ENCODE measurements at regions of chr16 and their contacts with region 1.

Region 1: GRCh38 chr16:27367461-27368357 is 34.3 kb upstream of the IL21R start:
- DNase-seq: no peak
- H3K4me3 ChIP-seq: 0 out of 2 replicates have a peak overlapping the region, but pooled peaks have one; percentile 1
- H3K27me3 ChIP-seq: no peaks in the 10 kb centered on the region
- CTCF ChIP-seq: peak; percentile 92

Region 2: DNA sequence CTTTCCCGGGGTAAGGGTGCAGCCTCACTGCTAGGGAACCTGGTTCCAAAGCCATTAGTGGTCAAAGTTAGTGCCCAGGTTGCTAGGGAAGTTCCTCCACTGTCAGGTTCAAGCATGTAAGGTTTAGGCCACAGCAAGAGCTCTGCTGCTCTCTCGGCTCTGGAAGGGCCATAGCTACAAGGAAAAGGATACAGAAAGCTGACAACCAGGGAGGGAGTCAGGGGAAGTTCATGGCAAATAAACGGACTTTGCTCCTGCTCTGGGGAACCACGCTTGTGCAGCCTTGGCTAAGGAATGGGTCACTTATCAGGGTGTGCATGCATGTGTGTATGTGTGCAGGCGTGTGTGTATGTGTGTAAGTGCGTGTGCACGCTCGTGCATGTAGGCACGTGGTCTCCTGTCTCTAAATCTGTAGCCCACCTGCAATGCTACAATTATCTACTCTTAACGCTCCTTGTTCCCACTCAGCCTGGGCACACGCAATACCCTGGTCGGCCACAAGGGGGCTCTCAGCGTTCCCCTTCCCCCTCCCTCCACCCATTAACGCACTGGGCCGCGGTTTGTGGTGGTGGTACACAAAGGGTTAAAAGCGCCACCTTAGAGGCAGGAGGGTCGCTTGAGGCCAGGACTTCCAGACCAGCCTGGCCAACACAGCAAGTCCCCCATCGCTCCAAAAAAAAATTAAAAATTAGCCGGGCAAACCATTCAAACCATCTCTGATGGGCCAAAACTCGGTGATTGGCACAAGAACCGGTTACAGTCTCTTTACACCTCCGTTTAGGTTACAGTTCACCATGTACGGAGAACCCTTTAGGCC is 212.8 kb before region 1 on chr16:
- CTCF ChIA-PET with region 1: interaction called, 51 read pairs
- POLR2A ChIA-PET with region 1: no interaction called
- DNase-seq: no peak
- H3K4me3 ChIP-seq: no peak overlapping the region
- H3K27me3 ChIP-seq: no peaks in the 10 kb centered on the region; the same call in none of the 2 replicates
- CTCF ChIP-seq: peak; percentile 98

Region 3: GRCh38 chr16:27179500-27180072 is 188.1 kb before region 1 on chr16:
- CTCF ChIA-PET with region 1: interaction called, 55 read pairs
- POLR2A ChIA-PET with region 1: no interaction called
- DNase-seq: no peak
- H3K4me3 ChIP-seq: no peak overlapping the region
- H3K27me3 ChIP-seq: peaks cover 3% of the 10 kb centered on the region; the same call in 1 of the 2 replicates
- CTCF ChIP-seq: peak; percentile 81

Region 4: DNA sequence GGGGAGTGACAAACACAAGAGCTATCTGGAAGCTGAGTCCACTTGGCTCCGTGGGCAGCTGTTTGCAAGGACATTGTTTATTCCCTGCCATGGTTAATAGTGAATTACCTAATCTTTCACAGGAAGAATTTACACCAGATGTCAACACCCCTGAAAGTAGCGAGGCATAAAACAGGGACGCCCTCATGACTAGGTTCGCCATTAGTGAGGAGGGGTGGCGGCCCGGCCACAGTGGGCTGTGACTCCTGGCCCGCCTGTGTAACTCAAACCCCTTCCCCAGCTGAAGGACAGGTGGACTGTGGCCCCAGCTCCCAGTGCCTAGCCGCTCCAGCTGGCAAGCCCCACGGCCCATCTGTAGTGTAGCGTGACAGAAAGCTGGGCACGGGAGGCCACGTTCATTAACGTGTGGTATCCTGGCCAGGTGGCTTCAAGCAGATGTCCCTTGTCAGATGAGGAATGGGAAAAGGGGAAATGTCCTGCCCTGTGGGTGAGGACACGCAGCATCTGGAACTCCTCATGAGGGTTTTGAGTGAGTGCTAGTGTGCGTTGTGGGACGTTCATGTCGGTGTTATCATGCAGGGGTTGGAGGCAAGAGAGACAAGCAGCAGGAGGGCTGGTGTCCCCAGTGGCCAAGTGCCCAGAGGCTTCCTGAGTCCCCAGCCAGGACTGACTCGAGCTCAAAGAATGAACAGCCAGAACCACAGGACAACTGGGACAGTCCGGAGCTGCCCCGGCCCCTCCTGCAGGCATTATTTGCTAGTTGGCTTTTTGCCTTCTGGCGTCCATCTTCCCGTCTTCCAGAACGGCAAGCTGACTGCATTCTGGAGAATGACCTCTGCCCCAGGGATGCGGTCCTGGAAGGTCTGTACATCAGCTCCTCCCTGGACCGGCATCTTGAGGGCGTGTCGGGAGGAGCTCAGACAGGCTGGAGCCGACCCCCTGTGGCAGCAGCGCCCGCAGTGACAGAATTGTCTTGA is 145.2 kb before region 1 on chr16:
- CTCF ChIA-PET with region 1: interaction called, 17 read pairs
- POLR2A ChIA-PET with region 1: no interaction called
- DNase-seq: peak; percentile 55
- H3K4me3 ChIP-seq: no peak overlapping the region
- H3K27me3 ChIP-seq: no peaks in the 10 kb centered on the region
- CTCF ChIP-seq: peak; percentile 1; the same call in 1 of the 2 replicates

Region 5: DNA sequence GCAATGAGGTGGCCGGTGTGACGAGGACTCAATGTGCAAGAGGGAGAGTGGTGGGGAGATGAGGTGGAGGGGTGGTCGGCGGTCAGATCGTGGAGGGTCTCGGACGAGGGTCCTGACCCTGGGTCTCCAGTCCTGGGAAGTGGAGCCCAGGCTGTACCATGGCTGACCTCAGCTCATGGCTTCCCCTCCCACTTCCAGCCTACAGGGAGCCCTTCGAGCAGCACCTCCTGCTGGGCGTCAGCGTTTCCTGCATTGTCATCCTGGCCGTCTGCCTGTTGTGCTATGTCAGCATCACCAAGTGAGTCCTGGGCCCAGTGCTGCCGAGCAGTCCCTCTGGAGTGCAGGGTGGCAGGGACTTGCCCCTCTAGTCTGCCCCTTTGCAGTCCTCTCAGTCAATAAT is 12.1 kb before region 1 on chr16:
- CTCF ChIA-PET with region 1: interaction called, 10 read pairs
- POLR2A ChIA-PET with region 1: no interaction called
- DNase-seq: no peak
- H3K4me3 ChIP-seq: no peak overlapping the region
- H3K27me3 ChIP-seq: no peaks in the 10 kb centered on the region
- CTCF ChIP-seq: peak; percentile 37

Measured in BJ (cell line).